CD4-positive, alpha-beta memory T cell (primary cell): ENCODE measurements at regions of chr9 and their contacts with region 1.

Region 1: DNA sequence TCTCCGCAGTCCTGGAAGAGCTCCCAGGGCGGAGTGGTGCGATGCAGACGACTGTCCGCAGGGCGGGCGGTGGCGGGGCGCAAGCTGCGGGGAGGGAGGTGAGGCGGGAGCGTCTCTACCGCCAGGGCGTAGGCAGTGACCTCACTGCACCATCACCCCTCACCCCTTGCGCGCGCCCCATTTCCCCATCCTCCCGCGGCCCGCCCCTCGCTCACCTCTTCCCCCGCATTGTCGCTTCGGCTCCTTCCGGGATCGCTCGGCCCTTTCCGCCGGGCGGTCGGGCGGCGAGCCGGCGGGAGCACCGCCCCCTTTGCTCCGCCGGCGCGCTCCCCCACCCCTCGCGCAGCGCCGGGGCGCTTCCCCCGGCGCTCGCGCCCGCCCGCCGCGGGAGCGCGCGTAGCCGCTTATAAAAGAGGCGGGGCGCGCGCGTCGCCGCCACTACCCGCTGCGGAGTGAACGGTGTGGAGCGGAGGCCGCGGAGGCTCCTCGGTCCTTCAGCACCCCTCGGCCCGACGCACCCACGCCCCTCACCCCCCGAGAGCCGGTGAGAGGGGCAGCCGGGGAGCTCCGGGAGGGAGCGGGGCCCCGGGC is at the start of gene SPTAN1:
- DNase-seq: peak; percentile 95 to 98 (median 96)
- H3K4me3 ChIP-seq: peak within 1 kb of the TSS; percentile 61 to 82
- H3K4me3 Mint-ChIP-seq: peak within 1 kb of the TSS in 7 of 8 donors; percentile 92 to 95 (median 93)
- H3K27ac ChIP-seq: peak within 1 kb of the TSS; percentile 91
- H3K27ac Mint-ChIP-seq: peak within 1 kb of the TSS; percentile 96 to 100 (median 99)
- H3K4me1 ChIP-seq: peaks cover 66% of the 10 kb centered on the region
- H3K4me1 Mint-ChIP-seq: peaks cover 22 to 31% (median 27%) of the 10 kb centered on the region in 4 donors
- H3K27me3 ChIP-seq: no peaks in the 10 kb centered on the region
- H3K27me3 Mint-ChIP-seq: no peaks in the 10 kb centered on the region
- total RNA-seq, gene SPTAN1: 593 to 595 TPM

Region 2: DNA sequence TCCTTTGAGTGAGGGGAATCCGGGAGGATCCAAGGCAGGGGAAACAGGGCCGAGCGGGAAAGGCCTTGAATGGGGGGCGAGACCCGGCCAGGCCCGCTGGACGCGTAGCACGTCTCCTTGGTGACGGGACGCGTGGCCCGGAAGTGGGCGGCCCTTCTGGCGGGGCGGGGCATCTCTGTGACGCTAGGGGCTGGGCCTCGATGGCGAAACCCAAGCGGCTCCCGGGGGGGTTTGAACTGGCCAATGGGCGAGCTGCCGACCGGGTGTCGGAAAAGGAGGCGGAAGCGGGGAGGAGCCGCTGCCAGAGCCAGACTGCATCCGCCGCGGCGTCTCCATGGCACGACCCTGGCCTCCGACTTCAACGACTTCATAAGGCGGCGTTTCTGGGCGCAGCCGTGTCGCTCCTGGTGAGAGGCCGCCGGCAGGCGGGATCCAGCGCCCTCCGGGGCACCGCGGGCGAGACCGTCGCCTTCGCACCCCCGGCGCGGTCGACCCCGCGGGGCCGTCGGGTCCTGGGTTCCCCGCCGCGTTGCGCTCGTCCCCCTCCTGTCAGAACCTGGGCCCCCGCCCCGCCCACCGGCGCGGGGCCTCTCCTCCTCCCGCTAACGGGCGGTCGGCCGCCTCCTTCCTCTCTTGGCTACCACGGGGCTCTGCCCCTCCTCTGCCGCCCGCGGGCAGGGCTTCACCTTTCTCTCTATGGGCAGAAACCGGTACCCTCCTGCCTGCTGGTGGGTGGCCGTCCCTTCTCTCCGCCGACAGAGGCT is 96.2 kb before region 1 on chr9 and contains the start of gene ODF2:
- CTCF ChIA-PET with region 1: no interaction called
- POLR2A ChIA-PET with region 1: interaction called, 7 read pairs
- intact Hi-C with region 1: loop called (anchors 1 kb)
- DNase-seq: peak; percentile 98
- H3K4me3 ChIP-seq: peak within 1 kb of the TSS; percentile 42 to 85
- H3K4me3 Mint-ChIP-seq: peak within 1 kb of the TSS; percentile 89 to 95 (median 92)
- H3K27ac ChIP-seq: peak within 1 kb of the TSS; percentile 85
- H3K27ac Mint-ChIP-seq: peak within 1 kb of the TSS; percentile 91 to 96 (median 93)
- H3K4me1 ChIP-seq: peaks cover 12% of the 10 kb centered on the region
- H3K4me1 Mint-ChIP-seq: peaks cover 4 to 22% (median 14%) of the 10 kb centered on the region in 4 donors
- H3K27me3 ChIP-seq: no peaks in the 10 kb centered on the region
- H3K27me3 Mint-ChIP-seq: no peaks in the 10 kb centered on the region
- total RNA-seq, gene ODF2: 32.3 to 33.6 TPM

Region 3: DNA sequence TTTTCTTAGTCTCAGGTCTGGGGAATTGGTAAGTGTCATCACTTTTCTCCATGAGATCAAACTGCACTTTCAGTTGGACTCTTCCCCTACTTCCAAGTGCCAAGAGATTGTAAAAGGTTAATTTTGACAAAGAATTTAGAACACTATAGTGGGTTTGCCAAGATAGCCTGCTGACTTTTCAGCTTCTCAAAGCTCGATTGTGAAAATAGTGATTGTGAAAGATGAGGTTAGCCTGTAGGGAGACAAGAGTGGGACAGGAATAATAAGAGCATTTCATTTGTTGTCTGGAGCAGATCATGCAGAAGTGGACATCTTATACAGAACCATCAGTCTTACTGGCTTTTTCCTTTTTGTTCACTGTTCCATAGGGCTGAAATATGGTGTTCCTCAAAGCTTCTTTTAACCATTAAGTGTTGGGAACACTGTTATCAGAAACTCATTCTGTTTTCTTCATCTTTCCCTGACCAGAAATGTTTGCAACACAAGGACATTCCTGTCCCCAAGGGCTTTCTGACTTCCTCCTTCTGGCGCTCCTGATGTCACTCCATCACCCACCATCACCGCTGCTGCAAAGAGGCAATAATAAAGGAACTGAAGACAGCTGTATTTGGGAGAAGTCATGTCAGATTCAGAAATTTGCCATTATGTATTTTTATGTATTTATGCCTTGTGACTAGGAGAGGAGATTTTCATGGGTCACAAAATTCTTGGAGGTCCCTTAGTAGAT is 11.5 kb before region 1 on chr9:
- CTCF ChIA-PET with region 1: interaction called, 11 read pairs
- POLR2A ChIA-PET with region 1: interaction called, 25 read pairs
- intact Hi-C with region 1: no loop called
- DNase-seq: no peak
- H3K4me3 ChIP-seq: no peak overlapping the region
- H3K4me3 Mint-ChIP-seq: no peak overlapping the region
- H3K27ac ChIP-seq: no peak overlapping the region
- H3K27ac Mint-ChIP-seq: peak overlapping the region in 3 of 7 donors; percentile 53 to 77 (median 68)
- H3K4me1 ChIP-seq: no peaks in the 10 kb centered on the region
- H3K4me1 Mint-ChIP-seq: peaks cover 3 to 5% (median 4%) of the 10 kb centered on the region in 4 donors
- H3K27me3 ChIP-seq: no peaks in the 10 kb centered on the region
- H3K27me3 Mint-ChIP-seq: no peaks in the 10 kb centered on the region

Region 4: DNA sequence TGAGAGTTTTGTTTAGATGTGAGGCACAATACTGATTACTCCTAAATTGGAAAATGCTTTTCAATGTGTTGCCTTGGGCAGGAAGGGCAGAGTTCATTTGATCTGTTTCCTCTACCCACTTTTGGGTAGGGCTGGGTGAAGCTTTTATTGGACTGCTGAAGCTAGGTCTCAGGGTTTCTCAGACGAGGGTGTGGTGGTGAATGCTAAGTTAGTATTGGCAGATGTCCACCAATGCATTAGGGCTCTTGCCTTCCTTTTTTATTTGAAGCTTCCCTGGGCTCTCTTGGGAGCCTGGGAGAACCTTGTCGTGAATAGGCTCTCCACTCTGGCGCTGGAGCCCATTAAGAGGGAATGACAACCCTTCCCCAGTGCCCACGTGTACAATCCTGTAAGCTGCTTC is 23.2 kb after region 1 on chr9:
- CTCF ChIA-PET with region 1: no interaction called
- POLR2A ChIA-PET with region 1: interaction called, 22 read pairs
- intact Hi-C with region 1: no loop called
- DNase-seq: no peak
- H3K4me3 ChIP-seq: no peak overlapping the region
- H3K4me3 Mint-ChIP-seq: no peak overlapping the region
- H3K27ac ChIP-seq: no peak overlapping the region
- H3K27ac Mint-ChIP-seq: peak overlapping the region in 5 of 7 donors; percentile 48 to 78 (median 65)
- H3K4me1 ChIP-seq: peaks cover 8% of the 10 kb centered on the region
- H3K4me1 Mint-ChIP-seq: peaks cover 10 to 18% (median 16%) of the 10 kb centered on the region in 4 donors
- H3K27me3 ChIP-seq: no peaks in the 10 kb centered on the region
- H3K27me3 Mint-ChIP-seq: no peaks in the 10 kb centered on the region

Region 5: GRCh38 chr9:128669786-128670185 is 117.5 kb after region 1 on chr9:
- CTCF ChIA-PET with region 1: no interaction called
- POLR2A ChIA-PET with region 1: no interaction called
- intact Hi-C with region 1: no loop called
- DNase-seq: no peak
- H3K4me3 ChIP-seq: no peak overlapping the region
- H3K4me3 Mint-ChIP-seq: no peak overlapping the region
- H3K27ac ChIP-seq: no peak overlapping the region
- H3K27ac Mint-ChIP-seq: no peak overlapping the region
- H3K4me1 ChIP-seq: no peaks in the 10 kb centered on the region
- H3K4me1 Mint-ChIP-seq: no peaks in the 10 kb centered on the region
- H3K27me3 ChIP-seq: no peaks in the 10 kb centered on the region
- H3K27me3 Mint-ChIP-seq: no peaks in the 10 kb centered on the region

Region 6: DNA sequence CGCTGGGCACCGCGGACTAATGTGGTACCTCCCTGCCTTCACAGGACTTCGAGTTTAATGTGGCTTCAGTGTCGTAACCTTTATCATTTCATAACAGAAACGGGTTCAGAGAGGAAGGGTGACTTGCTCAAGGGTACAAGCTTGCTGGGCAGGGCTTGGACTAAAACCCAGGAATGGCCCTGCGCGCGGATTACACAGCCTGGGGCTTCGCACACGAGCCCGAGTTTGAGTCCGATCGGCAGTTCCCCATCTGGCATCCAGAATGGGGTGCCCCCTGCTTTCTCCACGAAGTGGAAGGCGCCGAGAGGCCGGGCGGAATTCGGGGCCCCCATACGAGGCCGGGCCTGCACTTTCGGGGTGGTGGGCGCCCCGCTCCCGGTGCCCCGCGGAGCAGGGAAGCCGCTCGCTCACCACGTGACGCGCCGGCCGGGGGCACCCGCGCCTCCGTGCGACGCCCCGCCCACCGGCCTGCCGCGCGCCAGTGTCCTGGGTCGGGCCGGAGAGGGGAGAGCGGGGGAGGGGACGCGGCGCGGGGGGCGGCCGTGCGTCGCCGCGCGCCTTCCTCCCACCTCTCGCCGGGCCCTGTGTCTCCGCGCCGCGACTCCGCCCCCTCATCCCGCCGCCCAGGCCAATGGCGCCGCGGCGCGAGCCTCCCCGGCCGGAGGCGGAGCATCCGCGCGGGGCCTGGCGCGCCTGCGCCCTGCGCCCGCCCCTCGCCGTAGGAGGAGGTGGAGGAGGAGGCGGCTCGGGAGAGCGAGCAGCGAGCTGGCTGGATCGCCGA is 136.5 kb after region 1 on chr9 and contains the start of gene SET:
- CTCF ChIA-PET with region 1: no interaction called
- POLR2A ChIA-PET with region 1: interaction called, 22 read pairs
- intact Hi-C with region 1: loop called (anchors 2 kb)
- DNase-seq: peak; percentile 88 to 95 (median 93)
- H3K4me3 ChIP-seq: peak within 1 kb of the TSS; percentile 63 to 88
- H3K4me3 Mint-ChIP-seq: peak within 1 kb of the TSS; percentile 83 to 95 (median 92)
- H3K27ac ChIP-seq: peak within 1 kb of the TSS; percentile 82
- H3K27ac Mint-ChIP-seq: peak within 1 kb of the TSS; percentile 93 to 98 (median 96)
- H3K4me1 ChIP-seq: peaks cover 67% of the 10 kb centered on the region
- H3K4me1 Mint-ChIP-seq: peaks cover 40 to 67% (median 54%) of the 10 kb centered on the region in 4 donors
- H3K27me3 ChIP-seq: no peaks in the 10 kb centered on the region
- H3K27me3 Mint-ChIP-seq: peaks cover 0 to 1% of the 10 kb centered on the region in 2 donors
- total RNA-seq, gene SET: 261 to 264 TPM

Region 7: DNA sequence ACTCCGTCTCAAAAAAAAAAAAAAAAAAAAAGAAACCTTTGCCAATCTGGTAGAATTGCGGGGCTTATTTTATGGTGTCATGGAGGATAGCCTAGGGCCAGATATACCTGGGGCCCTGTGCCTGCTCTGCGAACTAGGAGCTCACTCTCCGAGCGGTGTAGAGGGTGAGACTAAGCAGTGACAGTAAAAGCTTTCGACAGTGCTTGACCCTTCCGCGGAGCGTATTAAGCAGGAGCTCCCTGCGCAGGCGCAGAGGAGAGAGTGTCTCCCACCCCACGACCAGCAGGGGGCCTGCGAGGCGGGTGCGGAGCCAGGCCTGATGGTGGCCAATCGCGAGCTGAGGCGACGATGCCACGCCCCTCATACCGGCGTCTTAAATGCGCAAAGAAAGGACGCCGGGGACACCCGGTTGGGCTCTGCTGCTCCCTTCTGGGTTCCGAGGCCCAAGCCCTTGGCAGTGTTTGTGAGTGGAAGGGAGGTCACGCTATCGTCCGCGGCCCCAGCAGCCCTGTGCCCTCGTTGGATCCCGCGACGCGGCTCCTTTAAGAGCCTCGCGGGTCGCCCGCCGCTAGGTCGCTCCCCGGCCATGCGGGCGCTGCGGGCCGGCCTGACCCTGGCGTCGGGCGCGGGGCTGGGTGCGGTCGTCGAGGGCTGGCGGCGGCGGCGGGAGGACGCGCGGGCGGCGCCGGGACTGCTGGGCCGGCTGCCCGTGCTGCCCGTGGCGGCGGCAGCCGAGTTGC is 266.0 kb after region 1 on chr9 and contains the start of gene ENDOG:
- CTCF ChIA-PET with region 1: interaction called, 3 read pairs
- POLR2A ChIA-PET with region 1: interaction called, 20 read pairs
- intact Hi-C with region 1: no loop called
- DNase-seq: peak; percentile 95 to 97 (median 96)
- H3K4me3 ChIP-seq: peak within 1 kb of the TSS; percentile 42 to 69
- H3K4me3 Mint-ChIP-seq: peak within 1 kb of the TSS; percentile 87 to 97 (median 89)
- H3K27ac ChIP-seq: peak within 1 kb of the TSS; percentile 45
- H3K27ac Mint-ChIP-seq: peak within 1 kb of the TSS; percentile 86 to 96 (median 93)
- H3K4me1 ChIP-seq: peaks cover 19% of the 10 kb centered on the region
- H3K4me1 Mint-ChIP-seq: peaks cover 7 to 37% (median 10%) of the 10 kb centered on the region in 4 donors
- H3K27me3 ChIP-seq: no peaks in the 10 kb centered on the region
- H3K27me3 Mint-ChIP-seq: no peaks in the 10 kb centered on the region
- total RNA-seq, gene ENDOG: 18.5 to 19.7 TPM